Left cardiac atrium (tissue), 4 donors: ENCODE measurements at regions of chr6 and their contacts with region 1.

Region 1: GRCh38 chr6:33700391-33701050 is 11.0 kb downstream of the UQCC2 start:
- DNase-seq: peak; percentile 68
- ATAC-seq: peak; percentile 13 to 45

Region 2: GRCh38 chr6:33585403-33586107 is 115.0 kb before region 1 on chr6:
- intact Hi-C with region 1: loop called (anchors 2 kb)
- DNase-seq: peak; percentile 86
- ATAC-seq: peak; percentile 58 to 65

Region 3: DNA sequence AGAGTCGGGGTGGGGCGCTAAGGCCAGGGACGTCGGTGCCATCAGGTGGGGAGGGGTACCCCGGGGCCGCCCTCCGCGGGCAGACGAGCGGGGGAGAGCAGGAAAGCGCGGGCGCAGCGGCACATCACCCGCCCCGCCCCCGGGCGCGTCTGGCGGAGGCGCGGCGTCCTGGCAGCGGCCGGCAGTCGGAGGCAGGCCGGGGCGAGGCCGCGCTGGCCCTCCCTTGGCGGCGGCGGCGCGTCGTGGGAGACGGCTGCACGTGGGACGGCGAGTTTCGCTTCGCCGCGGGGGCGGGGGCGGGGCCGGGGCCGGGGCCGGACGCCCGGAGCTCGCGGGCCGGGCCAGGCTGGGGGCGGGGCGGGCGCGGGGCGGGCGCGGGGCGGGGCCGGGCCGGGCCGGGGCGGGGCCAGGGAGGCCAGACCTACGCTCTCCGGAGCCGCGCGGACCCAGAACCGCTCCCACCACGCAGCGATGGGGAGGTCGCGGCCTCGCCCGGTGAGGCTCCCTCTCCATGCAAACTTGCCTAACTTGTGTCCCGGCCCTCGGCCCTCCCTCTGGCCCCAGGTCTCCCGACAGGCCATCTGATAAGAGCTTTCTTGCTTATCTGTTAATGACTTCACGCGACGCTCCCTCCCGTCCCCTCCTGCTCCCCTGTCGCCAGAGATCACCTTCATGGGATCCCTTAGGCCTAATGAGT is 66.9 kb before region 1 on chr6:
- intact Hi-C with region 1: loop called in 1 of 2 experiments (anchors 10 kb)
- DNase-seq: peak; percentile 81
- ATAC-seq: peak; percentile 86 to 90